Naive thymus-derived CD4-positive, alpha-beta T cell (primary cell): ENCODE measurements at regions of chrX and their contacts with region 1.

Region 1: DNA sequence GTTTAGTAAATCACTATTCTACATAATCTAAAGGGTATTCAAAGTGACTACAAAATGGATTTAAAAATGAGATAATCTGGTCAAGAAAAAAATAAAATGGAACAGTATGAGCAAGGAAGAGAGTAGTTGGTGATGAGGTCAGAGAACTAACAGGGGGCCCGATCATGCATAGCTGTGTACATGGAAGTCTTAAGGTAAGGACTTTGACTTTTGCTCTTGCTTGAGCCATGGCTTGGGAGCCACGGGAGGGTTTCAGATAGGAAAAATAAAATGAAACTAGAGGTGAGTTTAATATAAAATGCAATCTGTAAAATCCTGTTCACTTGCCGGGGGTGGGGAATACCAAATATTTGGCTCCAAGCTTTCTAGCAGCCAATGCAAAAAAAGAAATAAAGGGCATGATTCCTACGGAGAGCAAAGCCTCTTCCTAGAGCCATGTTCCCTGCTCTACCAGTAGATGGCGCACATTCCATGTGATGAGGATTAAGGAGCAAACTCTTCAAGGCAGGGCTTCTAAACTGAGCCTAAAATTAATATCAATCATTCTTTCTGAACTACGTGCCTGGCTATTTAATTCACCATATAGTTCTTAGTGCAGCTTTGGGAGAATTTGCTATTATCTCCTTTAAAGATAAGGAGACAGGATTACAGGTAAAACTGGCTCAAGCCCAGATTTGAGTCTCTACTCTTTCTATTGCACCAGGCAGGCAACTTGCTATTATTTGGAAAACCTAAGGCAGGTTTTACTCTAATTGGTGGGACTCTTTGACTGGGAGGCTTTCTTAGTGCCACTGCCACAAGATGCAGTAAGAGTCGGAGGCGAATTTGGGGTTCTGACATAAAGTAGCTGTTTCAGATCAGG is 6.8 kb upstream of the CLCN5 start:
- DNase-seq: peak in 8 of 9 donors; percentile 21 to 66 (median 46)
- ATAC-seq: peak; percentile 82
- H3K4me3 ChIP-seq: no peak overlapping the region
- H3K4me3 Mint-ChIP-seq: no peak overlapping the region
- H3K27ac ChIP-seq: no peak overlapping the region
- H3K27ac Mint-ChIP-seq: no peak overlapping the region
- H3K4me1 ChIP-seq: no peaks in the 10 kb centered on the region
- H3K4me1 Mint-ChIP-seq: peaks cover under 1 to 8% (median 3%) of the 10 kb centered on the region in 7 donors
- H3K27me3 ChIP-seq: no peaks in the 10 kb centered on the region
- H3K27me3 Mint-ChIP-seq: no peaks in the 10 kb centered on the region

Region 2: GRCh38 chrX:49761481-49761880 is 154.1 kb before region 1 on chrX:
- CTCF ChIA-PET with region 1: no interaction called
- POLR2A ChIA-PET with region 1: no interaction called
- intact Hi-C with region 1: loop called in 1 of 2 experiments (anchors 5 kb)
- DNase-seq: peak in 6 of 9 donors; percentile 6 to 21 (median 14)
- ATAC-seq: no peak
- H3K4me3 ChIP-seq: no peak overlapping the region
- H3K4me3 Mint-ChIP-seq: no peak overlapping the region
- H3K27ac ChIP-seq: no peak overlapping the region
- H3K27ac Mint-ChIP-seq: no peak overlapping the region
- H3K4me1 ChIP-seq: no peaks in the 10 kb centered on the region
- H3K4me1 Mint-ChIP-seq: peaks cover 0 to 8% (median 1%) of the 10 kb centered on the region in 7 donors
- H3K27me3 ChIP-seq: no peaks in the 10 kb centered on the region
- H3K27me3 Mint-ChIP-seq: peaks cover 0 to 16% (median 0%) of the 10 kb centered on the region in 5 donors

Region 3: DNA sequence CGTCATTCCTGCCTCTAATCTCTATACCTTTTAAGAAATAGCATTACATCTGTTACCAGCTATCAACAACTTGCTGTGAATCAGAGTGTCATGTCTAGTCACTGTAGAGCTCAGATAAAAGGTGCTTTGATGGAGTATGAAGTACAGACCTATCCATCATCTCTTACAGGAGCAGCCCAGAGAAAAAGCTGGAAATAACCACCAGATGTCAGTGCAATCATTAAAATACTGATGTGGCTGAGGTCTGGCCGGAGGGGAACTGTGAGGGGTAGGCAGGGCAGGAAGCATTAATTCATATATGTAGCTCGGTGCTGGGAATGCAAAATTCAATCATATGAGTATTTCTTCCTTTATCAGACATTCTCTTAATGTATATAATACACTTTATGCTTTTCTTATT is 184.6 kb after region 1 on chrX:
- CTCF ChIA-PET with region 1: no interaction called
- POLR2A ChIA-PET with region 1: no interaction called
- intact Hi-C with region 1: loop called in 1 of 2 experiments (anchors 5 kb)
- DNase-seq: peak in 2 of 9 donors; percentile 2
- ATAC-seq: no peak
- H3K4me3 ChIP-seq: no peak overlapping the region
- H3K4me3 Mint-ChIP-seq: no peak overlapping the region
- H3K27ac ChIP-seq: no peak overlapping the region
- H3K27ac Mint-ChIP-seq: peak overlapping the region in 1 of 9 donors; percentile 1
- H3K4me1 ChIP-seq: no peaks in the 10 kb centered on the region
- H3K4me1 Mint-ChIP-seq: peaks cover 0 to 4% (median 0%) of the 10 kb centered on the region in 7 donors
- H3K27me3 ChIP-seq: no peaks in the 10 kb centered on the region
- H3K27me3 Mint-ChIP-seq: no peaks in the 10 kb centered on the region

Region 4: GRCh38 chrX:50204364-50204899 is 288.8 kb after region 1 on chrX and contains the start of gene CCNB3:
- CTCF ChIA-PET with region 1: no interaction called
- POLR2A ChIA-PET with region 1: no interaction called
- intact Hi-C with region 1: loop called (anchors 1 to 2 kb)
- DNase-seq: peak; percentile 26 to 80 (median 67)
- ATAC-seq: peak; percentile 99
- H3K4me3 ChIP-seq: peak within 1 kb of the TSS; percentile 55
- H3K4me3 Mint-ChIP-seq: peak within 1 kb of the TSS; percentile 68 to 89 (median 86)
- H3K27ac ChIP-seq: peak within 1 kb of the TSS; percentile 58
- H3K27ac Mint-ChIP-seq: peak within 1 kb of the TSS; percentile 65 to 93 (median 90)
- H3K4me1 ChIP-seq: peaks cover 6 to 7% of the 10 kb centered on the region in 2 donors
- H3K4me1 Mint-ChIP-seq: peaks cover 0 to 17% (median 17%) of the 10 kb centered on the region in 7 donors
- H3K27me3 ChIP-seq: no peaks in the 10 kb centered on the region
- H3K27me3 Mint-ChIP-seq: no peaks in the 10 kb centered on the region
- total RNA-seq, gene CCNB3: 0.22 to 2.3 (median 0.31) TPM

Region 5: GRCh38 chrX:50333308-50333707 is 417.7 kb after region 1 on chrX:
- CTCF ChIA-PET with region 1: no interaction called
- POLR2A ChIA-PET with region 1: no interaction called
- intact Hi-C with region 1: loop called in 1 of 2 experiments (anchors 5 kb)
- DNase-seq: no peak
- ATAC-seq: no peak
- H3K4me3 ChIP-seq: no peak overlapping the region
- H3K4me3 Mint-ChIP-seq: no peak overlapping the region
- H3K27ac ChIP-seq: no peak overlapping the region
- H3K27ac Mint-ChIP-seq: no peak overlapping the region
- H3K4me1 ChIP-seq: no peaks in the 10 kb centered on the region
- H3K4me1 Mint-ChIP-seq: no peaks in the 10 kb centered on the region
- H3K27me3 ChIP-seq: no peaks in the 10 kb centered on the region
- H3K27me3 Mint-ChIP-seq: peaks cover 0 to 3% (median 0%) of the 10 kb centered on the region in 5 donors

Region 6: DNA sequence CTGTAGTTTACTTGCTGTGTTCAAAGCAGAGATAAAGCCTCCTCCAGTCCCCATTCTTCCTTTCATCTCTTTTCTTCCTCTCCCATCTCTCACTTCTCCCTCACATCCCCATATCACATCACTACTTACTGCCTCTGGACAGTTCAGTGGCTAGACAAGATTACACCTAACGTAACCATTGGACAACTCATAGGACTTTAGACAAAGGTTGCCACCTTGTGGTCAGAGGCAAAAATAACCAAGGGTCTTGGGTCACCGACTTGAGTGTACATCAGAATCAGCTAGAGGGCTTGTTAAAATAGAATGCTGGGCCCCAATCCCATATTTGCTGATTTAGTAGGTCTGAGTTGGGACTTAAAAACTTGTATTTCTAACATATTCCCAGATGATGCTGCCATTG is 664.4 kb after region 1 on chrX:
- CTCF ChIA-PET with region 1: no interaction called
- POLR2A ChIA-PET with region 1: no interaction called
- intact Hi-C with region 1: loop called in 1 of 2 experiments (anchors 1 kb)
- DNase-seq: peak in 6 of 9 donors; percentile 7 to 45 (median 27)
- ATAC-seq: no peak
- H3K4me3 ChIP-seq: no peak overlapping the region
- H3K4me3 Mint-ChIP-seq: no peak overlapping the region
- H3K27ac ChIP-seq: no peak overlapping the region
- H3K27ac Mint-ChIP-seq: peak overlapping the region in 1 of 9 donors; percentile 2
- H3K4me1 ChIP-seq: no peaks in the 10 kb centered on the region
- H3K4me1 Mint-ChIP-seq: peaks cover 0 to 1% (median 0%) of the 10 kb centered on the region in 7 donors
- H3K27me3 ChIP-seq: no peaks in the 10 kb centered on the region
- H3K27me3 Mint-ChIP-seq: peaks cover 0 to 12% (median 4%) of the 10 kb centered on the region in 5 donors

Region 7: GRCh38 chrX:50988649-50989048 is 1073.1 kb after region 1 on chrX:
- CTCF ChIA-PET with region 1: no interaction called
- POLR2A ChIA-PET with region 1: no interaction called
- intact Hi-C with region 1: loop called in 1 of 2 experiments (anchors 10 kb)
- DNase-seq: peak in 1 of 9 donors; percentile 5
- ATAC-seq: no peak
- H3K4me3 ChIP-seq: no peak overlapping the region
- H3K4me3 Mint-ChIP-seq: no peak overlapping the region
- H3K27ac ChIP-seq: no peak overlapping the region
- H3K27ac Mint-ChIP-seq: no peak overlapping the region
- H3K4me1 ChIP-seq: no peaks in the 10 kb centered on the region
- H3K4me1 Mint-ChIP-seq: no peaks in the 10 kb centered on the region
- H3K27me3 ChIP-seq: no peaks in the 10 kb centered on the region
- H3K27me3 Mint-ChIP-seq: peaks cover 0 to 14% (median 0%) of the 10 kb centered on the region in 5 donors